ENCODE measurements at regions of chr6 and their contacts with region 1.

Region 1: GRCh38 chr6:144582939-144583613 is 297.9 kb downstream of the UTRN start:
- DNase-seq: peak; percentile 12
- ATAC-seq: peak; percentile 57
- H3K4me3 Mint-ChIP-seq: peak overlapping the region; percentile 65
- H3K27ac Mint-ChIP-seq: peak overlapping the region; percentile 65
- H3K4me1 Mint-ChIP-seq: peaks cover 57% of the 10 kb centered on the region
- H3K27me3 Mint-ChIP-seq: no peaks in the 10 kb centered on the region
- CTCF ChIP-seq: no peak

Region 2: DNA sequence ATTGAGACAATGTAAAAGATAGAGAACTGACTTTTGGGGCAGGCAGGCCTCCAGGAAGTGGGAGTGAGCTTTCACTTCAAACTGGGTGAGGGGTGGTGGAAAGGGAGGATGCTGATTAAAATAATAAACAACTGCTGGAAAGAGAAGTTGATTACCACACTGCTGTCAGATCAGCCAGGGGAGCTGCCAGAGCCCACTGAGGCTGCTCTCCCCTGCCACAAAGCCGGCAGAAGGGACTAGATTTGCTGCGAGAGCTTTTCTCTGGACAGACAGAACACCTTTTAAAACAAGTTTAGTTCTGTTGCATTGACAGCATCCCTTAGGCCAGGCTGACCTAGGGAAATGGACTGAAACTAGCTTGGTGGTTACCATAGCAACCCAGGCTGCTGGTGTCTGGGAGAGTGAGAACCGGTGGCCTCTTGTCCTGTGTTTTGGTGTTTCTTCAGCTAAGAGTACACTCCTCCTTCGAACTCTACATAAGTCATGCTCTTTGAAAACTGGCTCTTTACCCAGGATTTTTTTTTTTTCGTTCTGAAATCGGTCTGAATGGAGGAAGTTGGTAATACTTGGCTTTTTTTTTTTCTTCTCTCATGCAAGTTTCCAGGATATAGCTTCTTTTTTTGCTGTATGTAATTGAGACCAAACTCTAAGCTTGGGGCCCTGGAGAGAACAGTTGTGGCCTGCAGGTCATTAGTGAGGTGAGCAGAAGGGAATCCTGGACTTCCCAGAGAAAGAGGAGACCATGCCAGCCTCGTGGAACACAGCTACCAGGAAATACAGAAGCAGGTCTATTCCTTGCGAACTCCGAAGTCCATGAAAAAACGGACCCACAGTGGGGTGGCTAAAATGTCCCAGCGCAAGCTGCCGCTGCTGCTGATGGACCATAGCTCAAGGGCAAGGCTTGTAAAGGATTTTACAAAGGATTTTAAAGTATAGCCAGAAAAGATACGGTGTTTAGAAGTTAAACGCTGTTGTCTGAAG is 76.4 kb after region 1 on chr6:
- CTCF ChIA-PET with region 1: interaction called, 12 read pairs
- POLR2A ChIA-PET with region 1: no interaction called
- DNase-seq: peak; percentile 39
- ATAC-seq: peak; percentile 61
- H3K4me3 Mint-ChIP-seq: peak overlapping the region; percentile 50
- H3K27ac Mint-ChIP-seq: peak overlapping the region; percentile 50
- H3K4me1 Mint-ChIP-seq: peaks cover 82% of the 10 kb centered on the region
- H3K27me3 Mint-ChIP-seq: peaks cover 52% of the 10 kb centered on the region
- CTCF ChIP-seq: no peak

Region 3: GRCh38 chr6:144778773-144779492 is 195.9 kb after region 1 on chr6:
- CTCF ChIA-PET with region 1: interaction called, 11 read pairs
- POLR2A ChIA-PET with region 1: no interaction called
- DNase-seq: no peak
- ATAC-seq: peak; percentile 59
- H3K4me3 Mint-ChIP-seq: no peak overlapping the region
- H3K27ac Mint-ChIP-seq: no peak overlapping the region
- H3K4me1 Mint-ChIP-seq: peaks cover 25% of the 10 kb centered on the region
- H3K27me3 Mint-ChIP-seq: no peaks in the 10 kb centered on the region
- CTCF ChIP-seq: no peak